Adrenal gland (tissue), 19 donors: ENCODE measurements at regions of chr16 and their contacts with region 1.

Region 1: GRCh38 chr16:10835281-10835931 is 16.8 kb upstream of the TVP23A start:
- DNase-seq: no peak
- H3K4me3 ChIP-seq: no peak overlapping the region
- H3K27ac ChIP-seq: no peak overlapping the region
- H3K4me1 ChIP-seq: no peaks in the 10 kb centered on the region
- H3K27me3 ChIP-seq: no peaks in the 10 kb centered on the region
- CTCF ChIP-seq: no peak
- POLR2A ChIP-seq: no peak

Region 2: DNA sequence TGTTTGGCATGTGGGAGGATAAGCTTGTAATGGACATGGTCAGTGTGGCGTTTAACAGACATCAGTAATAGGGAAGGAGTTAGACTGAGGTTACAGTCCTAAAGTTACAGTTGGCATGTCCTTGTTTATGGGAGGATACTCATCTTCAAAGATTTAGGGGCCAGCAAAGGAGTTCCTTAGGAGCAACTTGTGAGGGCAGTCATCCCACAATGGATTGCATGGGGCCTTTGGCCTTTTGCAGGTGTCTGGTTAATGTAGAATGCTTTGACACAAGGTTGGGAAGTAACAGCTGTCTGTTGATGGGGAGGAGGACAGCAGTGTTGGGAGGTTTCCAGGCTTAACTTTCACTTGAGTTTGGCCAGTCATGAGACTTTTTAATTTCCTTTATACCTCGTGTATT is 89.6 kb before region 1 on chr16:
- intact Hi-C with region 1: loop called in 1 of 2 experiments (anchors 5 kb)
- DNase-seq: peak in 1 of 7 donors; percentile 8
- H3K4me3 ChIP-seq: no peak overlapping the region
- H3K27ac ChIP-seq: peak overlapping the region in 1 of 5 donors; percentile 22
- H3K4me1 ChIP-seq: peaks cover 21 to 48% of the 10 kb centered on the region in 2 donors
- H3K27me3 ChIP-seq: no peaks in the 10 kb centered on the region
- CTCF ChIP-seq: no peak
- POLR2A ChIP-seq: no peak